GM12878 (cell line): ENCODE measurements at regions of chr11 and their contacts with region 1.

Region 1: DNA sequence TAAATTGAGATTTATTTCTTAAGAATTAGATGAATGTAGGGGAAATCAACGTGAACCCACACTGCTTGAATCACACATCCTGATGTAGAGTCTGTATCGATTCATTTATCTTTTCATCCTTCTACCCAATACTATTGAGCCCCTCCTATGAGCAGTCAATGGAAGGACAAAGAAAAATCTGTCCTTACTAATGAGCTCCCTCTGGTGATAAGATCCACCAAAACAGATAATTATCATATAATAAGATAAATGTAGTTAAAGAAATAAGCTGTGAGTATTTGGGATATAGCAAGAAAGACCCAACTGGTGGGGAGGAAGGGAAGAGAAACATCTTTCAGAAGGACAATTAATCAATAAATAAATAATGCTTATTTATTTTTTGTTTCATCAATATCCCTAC is 385.1 kb upstream of the CCDC90B start:
- DNase-seq: no peak
- ATAC-seq: no peak
- H3K4me3 ChIP-seq: no peak overlapping the region
- H3K27ac ChIP-seq: no peak overlapping the region
- H3K4me1 ChIP-seq: no peaks in the 10 kb centered on the region
- H3K27me3 ChIP-seq: no peaks in the 10 kb centered on the region
- CTCF ChIP-seq: peak in 1 of 3 experiments; percentile 33; a peak in 2 of 6 replicates
- EP300 ChIP-seq: no peak
- POLR2A ChIP-seq: no peak
- RAD21 ChIP-seq: peak; percentile 60

Region 2: DNA sequence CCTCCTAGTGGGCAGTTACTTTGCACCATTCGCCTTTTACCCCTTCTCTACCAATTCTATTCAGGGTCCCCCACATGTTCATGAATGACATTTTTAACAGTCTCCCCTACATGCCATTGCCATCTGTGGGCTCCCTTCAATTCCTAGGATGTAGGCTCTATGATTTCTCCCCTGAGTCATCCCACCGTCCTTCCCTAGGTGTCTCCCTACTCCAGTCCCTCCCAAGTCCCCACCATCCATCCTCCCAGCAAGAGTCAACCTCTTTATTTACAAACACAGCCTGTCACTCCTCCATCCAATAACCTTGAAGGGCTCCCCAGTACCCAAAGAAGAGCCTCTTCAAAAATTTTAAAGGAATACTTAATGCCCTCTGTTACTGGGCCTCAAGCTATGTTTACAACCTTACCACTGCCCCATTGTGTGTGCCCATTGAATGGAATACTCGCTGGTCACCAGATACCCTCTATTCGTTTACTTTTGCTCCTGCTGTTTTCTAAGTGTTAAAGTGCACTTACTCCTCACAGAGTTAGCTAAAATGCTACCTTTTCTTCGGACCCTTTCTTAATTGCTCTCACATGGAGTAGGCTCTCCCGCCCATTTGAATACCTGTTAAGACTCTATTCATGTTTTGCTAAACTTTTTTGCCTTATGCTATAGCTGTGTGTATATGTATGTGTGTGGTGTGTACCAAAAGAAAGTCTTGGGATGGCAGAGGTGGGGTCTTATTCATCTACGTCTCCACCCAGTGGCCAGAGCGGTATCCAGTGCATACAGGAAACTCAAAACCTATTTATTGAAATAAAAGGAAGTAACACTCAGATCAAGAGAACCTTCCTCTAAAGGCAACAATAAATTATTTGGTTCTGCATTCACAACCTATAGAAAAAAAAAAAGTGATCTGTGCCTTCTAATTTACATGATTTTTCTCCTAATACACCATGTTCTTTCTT is 149.4 kb before region 1 on chr11:
- CTCF ChIA-PET with region 1: no interaction called
- POLR2A ChIA-PET with region 1: no interaction called
- RAD21 ChIA-PET with region 1: no interaction called
- SMC1A ChIA-PET with region 1: no interaction called
- in situ Hi-C with region 1: no loop called
- intact Hi-C with region 1: loop called (anchors 5 kb)
- DNase-seq: no peak
- ATAC-seq: no peak
- H3K4me3 ChIP-seq: no peak overlapping the region
- H3K27ac ChIP-seq: no peak overlapping the region
- H3K4me1 ChIP-seq: no peaks in the 10 kb centered on the region
- H3K27me3 ChIP-seq: no peaks in the 10 kb centered on the region
- CTCF ChIP-seq: peak; percentile 15 to 41 (median 19); a peak in 4 of 6 replicates
- EP300 ChIP-seq: no peak
- POLR2A ChIP-seq: no peak
- RAD21 ChIP-seq: peak; percentile 57

Region 3: GRCh38 chr11:83617671-83618070 is 53.6 kb before region 1 on chr11:
- CTCF ChIA-PET with region 1: no interaction called
- POLR2A ChIA-PET with region 1: no interaction called
- RAD21 ChIA-PET with region 1: no interaction called
- SMC1A ChIA-PET with region 1: no interaction called
- in situ Hi-C with region 1: no loop called
- intact Hi-C with region 1: loop called (anchors 5 kb)
- DNase-seq: no peak
- ATAC-seq: no peak
- H3K4me3 ChIP-seq: no peak overlapping the region
- H3K27ac ChIP-seq: no peak overlapping the region
- H3K4me1 ChIP-seq: peaks cover 17% of the 10 kb centered on the region
- H3K27me3 ChIP-seq: no peaks in the 10 kb centered on the region
- CTCF ChIP-seq: no peak
- EP300 ChIP-seq: no peak
- POLR2A ChIP-seq: no peak
- RAD21 ChIP-seq: no peak